A549 (cell line): ENCODE measurements at regions of chr12 and their contacts with region 1.

Region 1: GRCh38 chr12:57726151-57726883 is 12.2 kb downstream of the AGAP2 start:
- DNase-seq: peak; percentile 89 to 97
- ATAC-seq: peak; percentile 87 to 95
- H3K4me3 ChIP-seq: peak overlapping the region; percentile 96
- H3K27ac ChIP-seq: peak overlapping the region; percentile 97 to 98
- H3K4me1 ChIP-seq: peaks cover 18% of the 10 kb centered on the region
- CTCF ChIP-seq: peak; percentile 82
- EP300 ChIP-seq: no peak
- POLR2A ChIP-seq: peak; percentile 77
- RAD21 ChIP-seq: peak; percentile 42 to 52; a peak in 3 of 5 replicates

Region 2: GRCh38 chr12:57576613-57577160 is 149.6 kb before region 1 on chr12:
- CTCF ChIA-PET with region 1: interaction called, 91 read pairs
- POLR2A ChIA-PET with region 1: no interaction called
- DNase-seq: no peak
- ATAC-seq: no peak; a peak in 1 of 6 replicates
- H3K4me3 ChIP-seq: no peak overlapping the region
- H3K27ac ChIP-seq: no peak overlapping the region
- H3K4me1 ChIP-seq: peaks cover 13% of the 10 kb centered on the region
- CTCF ChIP-seq: no peak
- EP300 ChIP-seq: no peak
- POLR2A ChIP-seq: no peak
- RAD21 ChIP-seq: no peak

Region 3: GRCh38 chr12:57712701-57713100 is 13.6 kb before region 1 on chr12:
- CTCF ChIA-PET with region 1: interaction called, 26 read pairs
- POLR2A ChIA-PET with region 1: no interaction called
- DNase-seq: no peak
- ATAC-seq: no peak
- H3K4me3 ChIP-seq: no peak overlapping the region
- H3K27ac ChIP-seq: no peak overlapping the region
- H3K4me1 ChIP-seq: no peaks in the 10 kb centered on the region
- CTCF ChIP-seq: no peak
- EP300 ChIP-seq: no peak
- POLR2A ChIP-seq: no peak
- RAD21 ChIP-seq: no peak

Region 4: DNA sequence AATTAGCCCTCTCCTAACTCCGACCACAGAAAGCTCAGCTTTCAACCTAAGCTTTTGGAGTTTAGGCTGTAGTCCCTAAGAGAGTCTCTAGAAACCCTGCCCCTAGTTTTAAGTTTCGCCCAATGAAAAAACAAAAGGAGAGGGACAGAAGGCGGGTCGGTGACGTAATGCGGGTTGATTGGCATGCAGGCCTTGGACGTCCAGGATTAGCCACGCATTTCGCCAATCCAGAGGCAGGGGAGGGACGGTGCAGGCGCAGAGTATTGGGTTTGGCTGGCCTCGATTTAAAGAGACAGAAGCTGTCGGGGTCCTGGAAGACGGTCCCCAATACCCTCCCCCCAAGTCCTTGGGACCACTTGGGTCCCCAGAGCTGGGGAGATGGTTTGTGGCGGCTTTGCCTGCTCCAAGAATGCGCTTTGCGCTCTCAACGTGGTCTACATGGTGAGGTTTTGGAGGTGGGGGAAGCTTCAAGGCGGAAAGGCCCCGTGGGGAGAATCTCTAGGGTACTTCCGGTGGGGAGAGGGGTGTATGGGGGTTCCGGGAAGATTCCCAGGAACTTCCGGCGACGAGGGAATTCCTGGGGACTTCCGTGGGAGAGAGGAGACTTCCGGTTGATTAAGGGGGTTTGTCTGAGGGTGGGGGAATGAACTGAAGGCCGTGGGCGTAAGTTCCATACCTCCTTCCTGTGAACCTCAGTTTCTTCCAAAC is 18.6 kb after region 1 on chr12 and contains the start of gene TSPAN31:
- CTCF ChIA-PET with region 1: interaction called, 242 read pairs
- POLR2A ChIA-PET with region 1: interaction called, 7 read pairs
- DNase-seq: peak; percentile 96 to 99
- ATAC-seq: peak; percentile 84 to 93
- H3K4me3 ChIP-seq: peak within 1 kb of the TSS; percentile 70
- H3K27ac ChIP-seq: peak within 1 kb of the TSS; percentile 93 to 98
- H3K4me1 ChIP-seq: peaks cover 13% of the 10 kb centered on the region; the same call in 2 of the 3 replicates
- CTCF ChIP-seq: no peak
- EP300 ChIP-seq: no peak
- POLR2A ChIP-seq: peak; percentile 34; the same call in 1 of the 2 replicates
- RAD21 ChIP-seq: no peak
- polyA plus RNA-seq, gene TSPAN31: 51.9 and 61.0 TPM in 2 replicates